Endothelial cell of umbilical vein (primary cell): ENCODE measurements at regions of chr4 and their contacts with region 1.

Region 1: DNA sequence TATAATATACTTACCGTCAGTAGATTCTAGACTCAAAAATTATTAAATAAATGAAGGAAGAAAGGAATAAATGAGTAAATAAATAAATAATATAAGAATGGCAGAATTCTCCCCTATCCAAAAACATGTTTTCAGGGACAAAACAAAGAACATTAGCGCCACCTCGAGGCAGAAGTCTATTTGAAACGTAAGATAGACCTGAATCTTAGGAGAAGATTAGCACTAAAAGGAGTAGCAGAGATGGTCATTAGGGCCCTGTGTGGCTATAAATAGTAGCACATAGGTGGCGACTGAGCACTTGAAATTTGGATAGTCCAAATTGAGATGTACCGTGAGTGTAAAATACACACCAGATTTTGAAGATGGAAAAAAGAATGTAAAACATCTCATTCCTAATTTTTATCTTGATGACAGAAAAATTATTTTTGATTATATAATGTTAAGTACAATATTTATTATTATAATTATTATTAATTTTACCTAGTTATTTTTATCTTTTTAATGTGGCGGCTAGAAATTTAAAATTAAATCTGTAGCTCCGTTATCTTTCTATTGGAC is 24.3 kb upstream of the SRD5A3 start:
- DNase-seq: peak; percentile 82
- H3K4me3 ChIP-seq: no peak overlapping the region
- H3K27ac ChIP-seq: no peak overlapping the region
- H3K4me1 ChIP-seq: peaks cover 41% of the 10 kb centered on the region
- H3K27me3 ChIP-seq: no peaks in the 10 kb centered on the region
- CTCF ChIP-seq: peak; percentile 45 to 49
- POLR2A ChIP-seq: no peak

Region 2: GRCh38 chr4:54999003-54999402 is 322.8 kb before region 1 on chr4:
- CTCF ChIA-PET with region 1: interaction called, 55 read pairs
- POLR2A ChIA-PET with region 1: no interaction called
- dilution Hi-C with region 1: loop called (anchors 25 kb)
- intact Hi-C with region 1: loop called (anchors 1 kb)
- DNase-seq: peak; percentile 65
- H3K4me3 ChIP-seq: no peak overlapping the region
- H3K27ac ChIP-seq: no peak overlapping the region
- H3K4me1 ChIP-seq: no peaks in the 10 kb centered on the region
- H3K27me3 ChIP-seq: peaks cover 0 to 2% of the 10 kb centered on the region in 2 experiments
- CTCF ChIP-seq: peak; percentile 34 to 43
- POLR2A ChIP-seq: no peak

Region 3: DNA sequence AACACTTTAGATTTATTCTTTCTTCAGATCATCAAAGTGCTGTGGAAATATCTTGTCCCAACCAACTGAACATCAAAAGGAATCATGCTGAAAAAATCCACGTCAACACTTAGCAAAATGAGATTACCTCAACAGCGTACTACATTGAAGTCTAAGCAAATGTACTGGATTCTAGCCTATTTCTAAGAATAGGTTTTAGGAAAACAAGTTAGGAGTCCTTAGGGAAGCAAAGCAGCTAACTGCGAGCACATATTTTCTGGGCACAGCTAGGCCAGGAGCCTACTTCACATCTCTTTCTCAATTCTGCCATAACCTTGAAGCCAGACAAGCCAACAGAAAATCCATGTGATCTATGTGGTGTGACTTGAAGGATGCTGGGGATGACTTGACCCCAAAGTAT is 218.6 kb before region 1 on chr4:
- CTCF ChIA-PET with region 1: interaction called, 38 read pairs
- POLR2A ChIA-PET with region 1: no interaction called
- dilution Hi-C with region 1: no loop called
- intact Hi-C with region 1: no loop called
- DNase-seq: no peak
- H3K4me3 ChIP-seq: no peak overlapping the region
- H3K27ac ChIP-seq: no peak overlapping the region
- H3K4me1 ChIP-seq: peaks cover 23% of the 10 kb centered on the region
- H3K27me3 ChIP-seq: no peaks in the 10 kb centered on the region
- CTCF ChIP-seq: no peak
- POLR2A ChIP-seq: no peak

Region 4: DNA sequence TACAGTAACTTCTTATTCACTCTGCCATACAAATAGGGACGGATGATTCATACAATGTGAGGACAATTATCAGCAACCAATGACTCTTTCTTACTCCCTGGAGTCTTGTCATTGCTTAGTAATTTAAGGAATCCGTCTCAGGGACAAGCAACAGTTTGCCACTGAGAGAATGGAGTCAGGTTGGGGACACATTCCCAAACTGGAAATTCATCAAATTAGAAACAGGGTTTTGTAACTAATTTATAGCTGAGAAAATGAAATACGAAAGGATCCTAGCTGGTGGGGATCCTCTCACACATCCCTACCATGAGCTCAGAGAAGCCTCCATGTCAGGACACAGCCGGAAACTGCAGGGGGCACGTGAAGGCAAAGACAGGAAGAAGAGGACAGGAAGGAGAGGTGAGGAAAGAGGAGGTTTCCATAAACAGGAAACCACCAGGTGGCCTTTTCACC is 146.0 kb before region 1 on chr4:
- CTCF ChIA-PET with region 1: interaction called, 8 read pairs
- POLR2A ChIA-PET with region 1: no interaction called
- dilution Hi-C with region 1: no loop called
- intact Hi-C with region 1: loop called (anchors 2 kb)
- DNase-seq: peak; percentile 66
- H3K4me3 ChIP-seq: peak overlapping the region in 1 of 3 experiments; percentile 39
- H3K27ac ChIP-seq: peak overlapping the region; percentile 91
- H3K4me1 ChIP-seq: peaks cover 72% of the 10 kb centered on the region
- H3K27me3 ChIP-seq: no peaks in the 10 kb centered on the region
- CTCF ChIP-seq: no peak
- POLR2A ChIP-seq: no peak

Region 5: GRCh38 chr4:55297346-55297745 is 24.4 kb before region 1 on chr4:
- CTCF ChIA-PET with region 1: no interaction called
- POLR2A ChIA-PET with region 1: no interaction called
- dilution Hi-C with region 1: no loop called
- intact Hi-C with region 1: loop called (anchors 1 kb)
- DNase-seq: no peak
- H3K4me3 ChIP-seq: no peak overlapping the region
- H3K27ac ChIP-seq: no peak overlapping the region
- H3K4me1 ChIP-seq: peaks cover 20% of the 10 kb centered on the region
- H3K27me3 ChIP-seq: peaks cover 0 to 4% of the 10 kb centered on the region in 2 experiments
- CTCF ChIP-seq: no peak
- POLR2A ChIP-seq: no peak

Region 6: DNA sequence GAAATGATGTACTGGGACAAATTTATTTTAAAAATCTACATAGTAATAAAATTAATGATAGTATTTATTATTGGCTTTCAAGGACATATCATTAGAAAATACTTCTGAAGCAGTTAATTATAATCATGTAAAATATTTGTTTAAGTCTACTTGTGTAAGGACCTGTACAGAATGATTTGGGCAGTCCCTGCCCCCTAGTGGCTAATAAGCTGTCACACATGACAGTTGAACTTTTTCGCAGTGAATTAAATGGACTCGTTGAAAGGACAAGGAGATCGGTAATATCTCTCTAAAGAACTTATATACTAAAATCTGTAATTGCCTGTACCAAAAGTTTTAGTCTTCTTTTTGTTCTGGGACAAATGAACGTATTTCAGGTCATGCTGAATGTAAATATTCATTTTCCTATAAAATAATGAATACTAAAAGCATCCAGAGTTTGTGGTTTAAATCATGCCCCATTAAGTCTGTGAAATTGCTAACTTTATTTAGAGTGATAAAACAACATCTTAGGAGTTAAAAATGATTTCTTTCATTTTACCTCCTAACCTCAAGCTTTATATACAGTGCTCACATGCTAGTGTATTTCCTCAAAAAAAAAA is 545.3 kb after region 1 on chr4:
- CTCF ChIA-PET with region 1: no interaction called
- POLR2A ChIA-PET with region 1: no interaction called
- dilution Hi-C with region 1: no loop called
- intact Hi-C with region 1: loop called (anchors 2 kb)
- DNase-seq: peak; percentile 78
- H3K4me3 ChIP-seq: no peak overlapping the region
- H3K27ac ChIP-seq: peak overlapping the region; percentile 55
- H3K4me1 ChIP-seq: peaks cover 21% of the 10 kb centered on the region
- H3K27me3 ChIP-seq: no peaks in the 10 kb centered on the region
- CTCF ChIP-seq: peak; percentile 65 to 68
- POLR2A ChIP-seq: no peak